ENCODE measurements at regions of chr7 and their contacts with region 1.

Region 1: GRCh38 chr7:149838224-149838947 is at the start of gene ZNF862:
- DNase-seq: peak; percentile 95
- H3K4me3 Mint-ChIP-seq: peak within 1 kb of the TSS; percentile 88
- H3K27ac Mint-ChIP-seq: peak within 1 kb of the TSS; percentile 56
- H3K4me1 Mint-ChIP-seq: peaks cover 21% of the 10 kb centered on the region
- H3K27me3 Mint-ChIP-seq: peaks cover 11% of the 10 kb centered on the region
- total RNA-seq, gene ZNF862: 14.6 and 16.4 TPM in 2 replicates

Region 2: DNA sequence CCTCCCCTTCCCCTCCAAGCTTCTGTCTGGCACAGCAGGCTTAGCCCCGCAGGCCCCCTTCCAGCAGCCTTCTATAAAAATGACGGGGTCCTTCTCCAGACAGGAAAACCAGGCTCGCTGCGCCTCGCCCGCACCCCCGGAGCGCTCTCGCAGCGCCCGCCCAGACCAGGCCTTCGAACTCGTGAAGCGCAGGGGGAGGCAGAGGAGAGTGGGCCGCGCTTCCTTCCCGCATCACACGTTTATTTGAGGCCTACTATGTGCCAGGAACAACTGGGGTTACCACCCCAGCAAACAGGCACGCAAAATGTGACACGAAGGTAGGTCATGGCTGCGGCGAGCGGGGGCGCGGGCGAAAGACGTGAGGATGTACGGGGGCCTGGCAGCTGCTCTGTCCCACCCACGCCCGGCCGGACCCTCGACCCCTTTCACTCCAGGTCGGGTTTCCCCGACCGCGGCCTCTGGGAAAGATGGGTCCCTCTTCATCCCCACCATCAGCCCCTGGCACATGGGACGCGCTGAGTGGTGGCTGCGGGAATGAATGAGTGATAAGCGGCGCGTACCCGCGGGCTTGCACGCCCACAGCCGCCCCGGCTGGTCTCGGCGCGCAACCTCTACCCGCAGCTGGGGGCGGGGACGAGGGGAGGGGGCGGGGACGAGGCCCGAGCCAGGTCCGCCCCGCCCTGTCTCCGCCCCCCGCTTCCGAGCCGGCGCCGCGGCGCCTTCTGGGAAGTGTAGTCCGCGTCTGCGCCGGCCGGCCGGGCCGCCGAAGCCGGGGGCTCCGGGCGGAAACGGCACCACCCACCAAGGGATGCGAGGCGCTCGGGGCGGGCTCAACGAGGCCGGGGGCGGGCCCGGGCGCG is 124.1 kb before region 1 on chr7:
- intact Hi-C with region 1: loop called (anchors 1 kb)
- DNase-seq: peak; percentile 79
- H3K4me3 Mint-ChIP-seq: peak overlapping the region; percentile 74
- H3K27ac Mint-ChIP-seq: peak overlapping the region; percentile 28
- H3K4me1 Mint-ChIP-seq: peaks cover 16% of the 10 kb centered on the region
- H3K27me3 Mint-ChIP-seq: no peaks in the 10 kb centered on the region

Region 3: DNA sequence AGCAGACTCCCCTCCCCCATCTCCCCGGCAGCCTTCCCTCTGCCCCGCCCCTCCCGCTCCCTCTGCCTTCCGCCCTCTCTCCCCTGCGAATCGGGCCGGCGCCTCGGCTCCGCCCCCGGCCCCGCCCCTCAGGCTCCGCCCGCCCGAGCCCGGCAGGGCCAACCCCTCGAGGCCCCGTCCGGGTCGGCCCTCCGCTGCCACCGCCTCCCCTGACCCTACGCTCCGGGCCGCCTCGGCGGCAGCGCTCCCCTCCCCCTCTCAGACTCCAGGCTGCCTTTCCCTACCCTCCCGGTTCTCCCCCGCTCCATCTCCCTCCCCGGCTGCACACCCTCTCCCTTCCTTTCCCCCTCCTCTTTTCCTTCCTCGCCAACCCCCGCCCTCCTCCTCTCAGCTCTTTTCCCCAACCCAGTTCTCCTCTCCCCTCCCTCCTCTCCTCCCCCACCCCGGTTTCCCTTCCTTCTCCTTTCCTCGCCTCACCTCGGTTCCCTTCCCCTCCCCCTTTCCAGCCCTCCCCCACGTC is 66.6 kb before region 1 on chr7:
- intact Hi-C with region 1: loop called (anchors 5 kb)
- DNase-seq: peak; percentile 78
- H3K4me3 Mint-ChIP-seq: peak overlapping the region; percentile 79
- H3K27ac Mint-ChIP-seq: no peak overlapping the region
- H3K4me1 Mint-ChIP-seq: peaks cover 3% of the 10 kb centered on the region
- H3K27me3 Mint-ChIP-seq: peaks cover 33% of the 10 kb centered on the region

Region 4: DNA sequence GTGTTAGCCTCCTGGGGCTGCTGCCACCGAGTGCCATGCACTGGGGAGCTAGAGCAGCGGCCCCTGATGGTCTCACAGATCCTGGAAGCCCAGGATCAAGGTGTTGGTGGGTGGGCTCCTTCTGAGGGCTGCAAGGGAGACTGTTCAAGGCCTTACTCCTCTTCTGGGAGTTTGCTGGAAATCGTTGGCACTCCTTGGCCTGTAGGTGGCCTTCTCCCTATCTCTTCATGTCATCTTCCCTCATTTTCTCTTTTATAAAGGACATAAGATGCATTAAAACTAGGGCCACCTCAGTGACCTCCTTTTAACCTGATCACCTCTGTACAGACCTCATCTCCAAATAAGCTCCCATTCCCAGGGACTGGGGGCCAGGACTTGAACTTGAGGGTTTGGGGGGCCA is 27.2 kb before region 1 on chr7:
- intact Hi-C with region 1: no loop called
- DNase-seq: no peak
- H3K4me3 Mint-ChIP-seq: no peak overlapping the region
- H3K27ac Mint-ChIP-seq: no peak overlapping the region
- H3K4me1 Mint-ChIP-seq: no peaks in the 10 kb centered on the region
- H3K27me3 Mint-ChIP-seq: no peaks in the 10 kb centered on the region

Region 5: GRCh38 chr7:149873074-149873969 is 34.9 kb after region 1 on chr7 and contains the start of gene ATP6V0E2:
- intact Hi-C with region 1: loop called (anchors 1 kb)
- DNase-seq: peak; percentile 91
- H3K4me3 Mint-ChIP-seq: peak within 1 kb of the TSS; percentile 89
- H3K27ac Mint-ChIP-seq: peak within 1 kb of the TSS; percentile 90
- H3K4me1 Mint-ChIP-seq: peaks cover 57% of the 10 kb centered on the region
- H3K27me3 Mint-ChIP-seq: no peaks in the 10 kb centered on the region
- total RNA-seq, gene ATP6V0E2: 50.2 and 54.3 TPM in 2 replicates

Measured in activated T-helper 2 cell treated with anti-CD3 and anti-CD28 coated beads, Interferon-gamma antibody, Interleukin-2, Interleukin-4, amounts not matched to agents 10 μg/mL and 5 μg/mL and 100 μg/mL, durations not matched to agents 14 hours and 24 hours and 36 hours (primary cell).